ENCODE measurements at regions of chr6 and their contacts with region 1.

Region 1: DNA sequence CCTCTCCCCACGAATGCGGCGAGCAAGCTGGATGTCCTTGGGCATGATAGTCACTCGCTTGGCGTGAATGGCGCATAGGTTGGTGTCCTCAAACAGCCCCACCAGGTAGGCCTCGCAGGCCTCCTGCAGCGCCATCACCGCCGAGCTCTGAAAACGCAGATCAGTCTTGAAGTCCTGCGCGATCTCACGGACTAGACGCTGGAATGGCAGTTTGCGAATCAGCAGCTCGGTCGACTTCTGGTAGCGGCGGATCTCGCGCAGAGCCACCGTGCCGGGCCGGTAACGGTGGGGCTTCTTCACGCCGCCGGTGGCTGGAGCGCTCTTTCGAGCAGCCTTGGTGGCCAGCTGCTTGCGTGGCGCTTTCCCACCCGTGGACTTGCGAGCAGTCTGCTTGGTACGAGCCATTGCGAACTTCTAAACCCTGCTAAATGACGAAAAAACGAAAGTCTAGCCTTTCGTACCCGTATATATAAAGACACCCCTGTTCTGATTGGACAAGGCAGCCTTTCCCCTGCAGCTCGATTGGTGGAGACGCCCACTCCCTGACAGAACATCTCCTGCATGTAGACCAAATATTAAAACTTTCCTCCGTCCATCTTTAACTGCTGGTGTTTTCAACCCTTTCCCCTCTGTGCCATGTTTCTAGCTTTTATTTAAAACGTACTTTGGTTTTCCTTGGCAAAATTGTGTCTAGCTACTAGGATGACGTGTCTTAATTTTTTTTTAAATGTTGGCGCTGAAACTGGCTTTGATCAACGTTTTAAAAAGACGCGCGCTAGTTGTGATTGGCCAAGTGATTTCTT is 109.8 kb downstream of the HFE start:
- DNase-seq: peak; percentile 55 to 66
- H3K4me3 ChIP-seq: peak overlapping the region; percentile 77
- H3K27ac ChIP-seq: peak overlapping the region; percentile 85
- H3K4me1 ChIP-seq: peaks cover 11% of the 10 kb centered on the region; the same call in 1 of the 2 replicates
- H3K27me3 ChIP-seq: no peaks in the 10 kb centered on the region
- CTCF ChIP-seq: no peak

Region 2: GRCh38 chr6:26025894-26026832 is 170.9 kb before region 1 on chr6:
- CTCF ChIA-PET with region 1: interaction called, 3 read pairs
- POLR2A ChIA-PET with region 1: interaction called, 27 read pairs
- intact Hi-C with region 1: no loop called
- DNase-seq: peak; percentile 92 to 93
- H3K4me3 ChIP-seq: peak overlapping the region; percentile 75
- H3K27ac ChIP-seq: peak overlapping the region; percentile 98
- H3K4me1 ChIP-seq: peaks cover 57% of the 10 kb centered on the region
- H3K27me3 ChIP-seq: no peaks in the 10 kb centered on the region
- CTCF ChIP-seq: peak; percentile 89

Region 3: GRCh38 chr6:26103770-26104456 is 93.1 kb before region 1 on chr6:
- CTCF ChIA-PET with region 1: interaction called, 6 read pairs
- POLR2A ChIA-PET with region 1: interaction called, 49 read pairs
- intact Hi-C with region 1: no loop called
- DNase-seq: peak; percentile 87
- H3K4me3 ChIP-seq: peak overlapping the region; percentile 65
- H3K27ac ChIP-seq: peak overlapping the region; percentile 78
- H3K4me1 ChIP-seq: peaks cover 27% of the 10 kb centered on the region
- H3K27me3 ChIP-seq: no peaks in the 10 kb centered on the region
- CTCF ChIP-seq: peak; percentile 68

Region 4: DNA sequence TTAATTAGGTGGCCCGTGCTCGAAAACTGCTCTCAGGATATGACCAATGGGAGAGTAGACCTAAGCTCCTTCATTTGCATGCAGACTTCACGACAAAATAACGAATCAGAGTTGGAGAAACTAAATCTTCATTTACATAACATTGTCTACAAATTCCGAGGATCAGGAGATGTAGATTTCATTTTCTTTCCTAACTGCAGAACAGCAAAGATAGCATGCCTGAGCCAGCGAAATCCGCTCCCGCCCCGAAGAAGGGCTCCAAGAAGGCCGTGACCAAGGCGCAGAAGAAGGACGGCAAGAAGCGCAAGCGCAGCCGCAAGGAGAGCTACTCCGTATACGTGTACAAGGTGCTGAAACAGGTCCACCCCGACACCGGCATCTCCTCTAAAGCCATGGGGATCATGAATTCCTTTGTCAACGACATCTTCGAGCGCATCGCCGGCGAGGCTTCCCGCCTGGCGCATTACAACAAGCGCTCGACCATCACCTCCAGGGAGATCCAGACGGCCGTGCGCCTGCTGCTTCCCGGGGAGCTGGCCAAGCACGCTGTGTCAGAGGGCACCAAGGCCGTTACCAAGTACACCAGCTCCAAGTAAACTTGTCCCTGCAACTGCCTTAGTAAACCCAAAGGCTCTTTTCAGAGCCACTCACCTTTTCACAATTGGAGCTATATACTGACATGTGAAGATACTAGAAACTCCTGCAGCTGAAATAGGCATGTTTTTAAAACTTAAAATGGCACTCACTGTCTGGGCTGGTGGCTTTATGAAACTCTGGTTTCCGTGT is 13.3 kb before region 1 on chr6:
- CTCF ChIA-PET with region 1: interaction called, 8 read pairs
- POLR2A ChIA-PET with region 1: interaction called, 73 read pairs
- intact Hi-C with region 1: no loop called
- DNase-seq: peak; percentile 72 to 87
- H3K4me3 ChIP-seq: peak overlapping the region; percentile 54
- H3K27ac ChIP-seq: peak overlapping the region; percentile 65
- H3K4me1 ChIP-seq: peaks cover 12% of the 10 kb centered on the region; the same call in 1 of the 2 replicates
- H3K27me3 ChIP-seq: no peaks in the 10 kb centered on the region
- CTCF ChIP-seq: no peak

Region 5: DNA sequence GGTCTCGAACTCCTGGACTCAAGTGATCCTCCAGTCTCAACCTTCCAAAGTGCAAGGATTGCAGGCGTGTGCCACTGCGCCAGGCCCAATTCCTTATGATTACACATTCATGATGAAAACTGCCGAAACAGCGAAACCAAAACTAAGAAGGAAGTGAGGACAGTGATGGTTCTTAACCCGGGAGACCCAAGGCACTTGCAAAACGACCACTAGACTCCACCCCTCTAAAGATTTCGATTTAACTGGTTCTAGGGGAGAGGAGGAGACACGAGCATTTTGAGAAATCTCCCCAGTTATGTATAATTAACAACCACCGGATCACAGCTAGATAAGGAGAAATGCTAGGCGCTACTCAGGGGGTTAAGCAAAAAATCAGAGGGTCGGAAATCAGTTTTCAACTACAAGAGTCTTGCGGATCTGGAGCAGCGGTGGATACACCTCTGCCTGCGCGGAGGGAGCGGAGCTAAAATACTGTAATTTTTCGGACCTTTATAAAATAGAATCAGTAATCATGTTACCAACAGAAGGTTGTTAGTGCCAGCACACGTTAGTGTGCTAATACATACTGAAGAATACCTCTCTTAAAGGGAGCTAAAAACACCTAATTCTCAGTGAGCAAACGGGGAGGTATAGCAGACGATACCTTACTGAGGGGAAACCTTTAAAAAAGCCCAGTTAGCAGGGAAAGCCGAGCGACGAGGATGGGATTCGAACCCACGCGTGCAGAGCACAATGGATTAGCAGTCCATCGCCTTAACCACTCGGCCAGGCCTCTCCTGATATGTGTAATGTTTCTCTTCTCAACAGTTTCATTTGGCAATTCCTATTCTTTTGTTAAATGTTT is 108.0 kb after region 1 on chr6:
- CTCF ChIA-PET with region 1: no interaction called
- POLR2A ChIA-PET with region 1: interaction called, 43 read pairs
- intact Hi-C with region 1: no loop called
- DNase-seq: peak; percentile 75 to 77
- H3K4me3 ChIP-seq: peak overlapping the region; percentile 65
- H3K27ac ChIP-seq: peak overlapping the region; percentile 96
- H3K4me1 ChIP-seq: peaks cover 19% of the 10 kb centered on the region; the same call in 1 of the 2 replicates
- H3K27me3 ChIP-seq: no peaks in the 10 kb centered on the region
- CTCF ChIP-seq: no peak

Region 6: GRCh38 chr6:26553635-26554446 is 356.8 kb after region 1 on chr6:
- CTCF ChIA-PET with region 1: no interaction called
- POLR2A ChIA-PET with region 1: interaction called, 11 read pairs
- intact Hi-C with region 1: no loop called
- DNase-seq: peak; percentile 85 to 87
- H3K4me3 ChIP-seq: peak overlapping the region; percentile 69
- H3K27ac ChIP-seq: peak overlapping the region; percentile 60
- H3K4me1 ChIP-seq: peaks cover 31% of the 10 kb centered on the region
- H3K27me3 ChIP-seq: no peaks in the 10 kb centered on the region
- CTCF ChIP-seq: no peak

Region 7: DNA sequence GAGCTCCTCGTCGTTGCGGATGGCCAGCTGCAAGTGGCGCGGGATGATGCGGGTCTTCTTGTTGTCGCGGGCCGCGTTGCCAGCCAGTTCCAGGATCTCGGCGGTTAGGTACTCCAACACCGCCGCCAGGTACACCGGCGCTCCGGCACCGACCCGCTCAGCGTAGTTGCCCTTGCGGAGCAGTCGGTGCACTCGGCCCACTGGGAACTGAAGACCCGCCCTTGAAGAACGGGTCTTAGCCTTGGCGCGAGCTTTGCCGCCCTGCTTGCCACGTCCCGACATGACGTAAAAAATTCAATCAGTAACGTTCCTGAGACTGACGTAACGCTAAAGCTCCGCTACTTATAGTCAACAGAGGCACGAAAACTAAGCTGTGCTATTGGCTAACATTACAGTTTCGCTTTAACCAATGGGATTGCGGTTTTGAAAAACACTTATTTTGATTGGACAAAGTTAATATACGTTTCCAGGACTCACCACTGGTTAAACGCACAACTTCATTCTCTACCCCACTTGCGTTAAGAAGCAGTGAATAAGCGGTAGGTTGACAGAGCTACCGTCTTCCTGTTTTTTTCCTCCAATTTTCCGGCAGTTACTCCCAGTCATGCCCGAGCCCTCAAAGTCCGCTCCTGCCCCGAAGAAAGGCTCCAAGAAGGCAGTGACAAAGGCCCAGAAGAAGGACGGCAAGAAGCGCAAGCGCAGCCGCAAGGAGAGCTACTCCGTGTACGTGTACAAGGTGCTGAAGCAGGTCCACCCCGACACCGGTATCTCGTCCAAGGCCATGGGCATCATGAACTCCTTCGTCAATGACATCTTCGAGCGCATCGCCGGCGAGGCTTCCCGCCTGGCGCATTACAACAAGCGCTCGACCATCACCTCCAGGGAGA is 1641.3 kb after region 1 on chr6:
- CTCF ChIA-PET with region 1: no interaction called
- POLR2A ChIA-PET with region 1: interaction called, 12 read pairs
- intact Hi-C with region 1: no loop called
- DNase-seq: peak; percentile 71 to 85
- H3K4me3 ChIP-seq: peak overlapping the region; percentile 58
- H3K27ac ChIP-seq: peak overlapping the region; percentile 87
- H3K4me1 ChIP-seq: no peaks in the 10 kb centered on the region
- H3K27me3 ChIP-seq: no peaks in the 10 kb centered on the region
- CTCF ChIP-seq: no peak